ENCODE measurements at regions of chr4 and their contacts with region 1.

Region 1: GRCh38 chr4:113761620-113762185 is at the start of gene CAMK2D:
- DNase-seq: peak; percentile 91
- H3K4me3 ChIP-seq: peak within 1 kb of the TSS; percentile 93 to 98 (median 97)
- H3K27ac ChIP-seq: peak within 1 kb of the TSS; percentile 84
- H3K4me1 ChIP-seq: peaks cover 21% of the 10 kb centered on the region
- H3K27me3 ChIP-seq: no peaks in the 10 kb centered on the region
- CTCF ChIP-seq: peak; percentile 35 to 72
- POLR2A ChIP-seq: peak; percentile 51
- total RNA-seq, gene CAMK2D: 23.0 and 30.7 TPM in 2 replicates

Region 2: DNA sequence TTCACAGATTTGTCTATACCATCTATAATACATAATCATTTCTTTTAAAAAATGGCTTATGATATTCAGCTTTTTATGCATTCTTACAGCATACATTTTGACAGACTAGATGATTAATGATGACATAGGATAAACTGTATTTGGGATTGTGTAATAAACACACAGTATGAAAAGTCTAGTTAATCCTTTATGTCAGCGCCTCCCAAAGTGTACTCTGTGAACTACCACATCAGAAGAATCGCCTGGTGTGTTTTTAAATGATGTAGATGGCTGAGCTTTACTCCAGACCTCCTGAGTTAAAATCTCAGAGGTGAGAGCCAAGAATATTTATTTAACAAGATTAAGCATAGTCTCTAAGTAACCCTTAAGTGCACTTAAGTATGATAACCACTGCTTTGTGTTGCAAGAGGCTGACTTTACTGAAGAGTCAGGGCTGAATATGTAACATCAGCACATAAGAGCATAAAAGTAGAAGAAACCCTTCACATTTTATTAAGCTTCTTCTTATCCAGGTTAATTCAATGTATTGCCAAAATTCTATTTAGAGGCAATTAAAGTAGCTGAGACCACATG is 608.1 kb before region 1 on chr4:
- CTCF ChIA-PET with region 1: no interaction called
- POLR2A ChIA-PET with region 1: no interaction called
- dilution Hi-C with region 1: no loop called
- intact Hi-C with region 1: no loop called
- DNase-seq: no peak
- H3K4me3 ChIP-seq: no peak overlapping the region
- H3K27ac ChIP-seq: no peak overlapping the region
- H3K4me1 ChIP-seq: no peaks in the 10 kb centered on the region
- H3K27me3 ChIP-seq: peaks cover 0 to 3% of the 10 kb centered on the region in 2 experiments
- CTCF ChIP-seq: no peak
- POLR2A ChIP-seq: no peak

Region 3: GRCh38 chr4:113278324-113278934 is 483.3 kb before region 1 on chr4:
- CTCF ChIA-PET with region 1: no interaction called
- POLR2A ChIA-PET with region 1: no interaction called
- dilution Hi-C with region 1: no loop called
- intact Hi-C with region 1: loop called (anchors 1 kb)
- DNase-seq: peak; percentile 70
- H3K4me3 ChIP-seq: no peak overlapping the region
- H3K27ac ChIP-seq: no peak overlapping the region
- H3K4me1 ChIP-seq: no peaks in the 10 kb centered on the region
- H3K27me3 ChIP-seq: peaks cover 5 to 19% of the 10 kb centered on the region in 2 experiments
- CTCF ChIP-seq: peak; percentile 86 to 87
- POLR2A ChIP-seq: no peak

Region 4: GRCh38 chr4:113435893-113436292 is 325.8 kb before region 1 on chr4:
- CTCF ChIA-PET with region 1: no interaction called
- POLR2A ChIA-PET with region 1: no interaction called
- dilution Hi-C with region 1: no loop called
- intact Hi-C with region 1: loop called (anchors 1 kb)
- DNase-seq: peak; percentile 94
- H3K4me3 ChIP-seq: peak overlapping the region in 1 of 3 experiments; percentile 44
- H3K27ac ChIP-seq: peak overlapping the region; percentile 78
- H3K4me1 ChIP-seq: peaks cover 22% of the 10 kb centered on the region
- H3K27me3 ChIP-seq: no peaks in the 10 kb centered on the region
- CTCF ChIP-seq: no peak
- POLR2A ChIP-seq: no peak

Region 5: DNA sequence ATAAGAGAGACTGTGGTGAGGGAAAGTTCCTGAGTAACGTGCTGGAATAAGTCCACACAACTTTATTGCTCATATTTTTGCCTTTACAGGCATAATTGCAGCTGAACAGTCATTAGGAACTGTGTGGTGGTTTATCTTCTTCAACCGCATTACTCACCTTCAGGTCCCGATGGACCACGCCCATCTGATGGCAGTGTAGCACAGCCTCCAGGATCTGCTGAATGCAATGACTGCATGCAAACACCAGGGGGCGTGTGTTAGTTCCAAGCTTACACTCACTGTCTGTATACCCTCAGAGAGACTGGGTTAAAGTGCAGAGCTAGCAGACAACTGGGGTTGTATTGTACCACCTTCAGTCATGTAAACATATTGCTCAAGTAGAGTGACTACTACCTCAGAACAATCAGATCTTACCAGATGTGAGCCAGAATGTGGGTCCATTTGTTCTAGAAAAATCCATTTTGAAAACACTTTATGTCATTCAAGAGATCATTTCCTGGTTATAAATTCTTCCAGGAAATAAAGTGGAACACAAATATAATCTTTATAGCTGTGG is 214.1 kb before region 1 on chr4:
- CTCF ChIA-PET with region 1: interaction called, 32 read pairs
- POLR2A ChIA-PET with region 1: no interaction called
- dilution Hi-C with region 1: no loop called
- intact Hi-C with region 1: loop called (anchors 1 kb)
- DNase-seq: peak; percentile 96
- H3K4me3 ChIP-seq: no peak overlapping the region
- H3K27ac ChIP-seq: peak overlapping the region; percentile 4
- H3K4me1 ChIP-seq: peaks cover 3% of the 10 kb centered on the region
- H3K27me3 ChIP-seq: no peaks in the 10 kb centered on the region
- CTCF ChIP-seq: peak; percentile 92 to 98
- POLR2A ChIP-seq: no peak

Region 6: GRCh38 chr4:113711883-113712662 is 49.6 kb before region 1 on chr4:
- CTCF ChIA-PET with region 1: no interaction called
- POLR2A ChIA-PET with region 1: no interaction called
- dilution Hi-C with region 1: no loop called
- intact Hi-C with region 1: no loop called
- DNase-seq: no peak
- H3K4me3 ChIP-seq: no peak overlapping the region
- H3K27ac ChIP-seq: no peak overlapping the region
- H3K4me1 ChIP-seq: no peaks in the 10 kb centered on the region
- H3K27me3 ChIP-seq: no peaks in the 10 kb centered on the region
- CTCF ChIP-seq: no peak
- POLR2A ChIP-seq: no peak

Region 7: GRCh38 chr4:113958766-113959538 is 197.2 kb after region 1 on chr4:
- CTCF ChIA-PET with region 1: no interaction called
- POLR2A ChIA-PET with region 1: no interaction called
- dilution Hi-C with region 1: no loop called
- intact Hi-C with region 1: loop called (anchors 2 kb)
- DNase-seq: peak; percentile 95
- H3K4me3 ChIP-seq: peak overlapping the region in 2 of 3 experiments; percentile 10 to 83
- H3K27ac ChIP-seq: peak overlapping the region; percentile 89
- H3K4me1 ChIP-seq: peaks cover 69% of the 10 kb centered on the region
- H3K27me3 ChIP-seq: no peaks in the 10 kb centered on the region
- CTCF ChIP-seq: no peak
- POLR2A ChIP-seq: peak; percentile 70

Region 8: GRCh38 chr4:114077610-114078009 is 315.9 kb after region 1 on chr4:
- CTCF ChIA-PET with region 1: no interaction called
- POLR2A ChIA-PET with region 1: no interaction called
- dilution Hi-C with region 1: no loop called
- intact Hi-C with region 1: loop called (anchors 5 kb)
- DNase-seq: peak; percentile 92
- H3K4me3 ChIP-seq: no peak overlapping the region
- H3K27ac ChIP-seq: peak overlapping the region; percentile 58
- H3K4me1 ChIP-seq: peaks cover 13% of the 10 kb centered on the region
- H3K27me3 ChIP-seq: no peaks in the 10 kb centered on the region
- CTCF ChIP-seq: no peak
- POLR2A ChIP-seq: no peak

Region 9: GRCh38 chr4:114136069-114136468 is 374.4 kb after region 1 on chr4:
- CTCF ChIA-PET with region 1: no interaction called
- POLR2A ChIA-PET with region 1: no interaction called
- dilution Hi-C with region 1: no loop called
- intact Hi-C with region 1: no loop called
- DNase-seq: peak; percentile 46
- H3K4me3 ChIP-seq: no peak overlapping the region
- H3K27ac ChIP-seq: no peak overlapping the region
- H3K4me1 ChIP-seq: no peaks in the 10 kb centered on the region
- H3K27me3 ChIP-seq: no peaks in the 10 kb centered on the region
- CTCF ChIP-seq: no peak
- POLR2A ChIP-seq: no peak

Measured in endothelial cell of umbilical vein (primary cell).